Heart right ventricle (tissue), 16 donors: ENCODE measurements at regions of chr1 and their contacts with region 1.

Region 1: GRCh38 chr1:29370067-29370466 is 133.7 kb downstream of the PTPRU start:
- DNase-seq: no peak
- ATAC-seq: no peak
- H3K4me3 ChIP-seq: no peak overlapping the region
- H3K27ac ChIP-seq: no peak overlapping the region
- H3K4me1 ChIP-seq: no peaks in the 10 kb centered on the region
- H3K27me3 ChIP-seq: peaks cover 0 to 73% (median 33%) of the 10 kb centered on the region in 7 donors
- CTCF ChIP-seq: no peak

Region 2: GRCh38 chr1:29354511-29355098 is 15.5 kb before region 1 on chr1:
- intact Hi-C with region 1: loop called in 1 of 10 experiments (anchors 2 kb)
- DNase-seq: no peak
- ATAC-seq: no peak
- H3K4me3 ChIP-seq: no peak overlapping the region
- H3K27ac ChIP-seq: no peak overlapping the region
- H3K4me1 ChIP-seq: no peaks in the 10 kb centered on the region
- H3K27me3 ChIP-seq: peaks cover 0 to 69% (median 34%) of the 10 kb centered on the region in 7 donors
- CTCF ChIP-seq: no peak